Dorsolateral prefrontal cortex (tissue), 120 donors: ENCODE measurements at regions of chr13 and their contacts with region 1.

Region 1: DNA sequence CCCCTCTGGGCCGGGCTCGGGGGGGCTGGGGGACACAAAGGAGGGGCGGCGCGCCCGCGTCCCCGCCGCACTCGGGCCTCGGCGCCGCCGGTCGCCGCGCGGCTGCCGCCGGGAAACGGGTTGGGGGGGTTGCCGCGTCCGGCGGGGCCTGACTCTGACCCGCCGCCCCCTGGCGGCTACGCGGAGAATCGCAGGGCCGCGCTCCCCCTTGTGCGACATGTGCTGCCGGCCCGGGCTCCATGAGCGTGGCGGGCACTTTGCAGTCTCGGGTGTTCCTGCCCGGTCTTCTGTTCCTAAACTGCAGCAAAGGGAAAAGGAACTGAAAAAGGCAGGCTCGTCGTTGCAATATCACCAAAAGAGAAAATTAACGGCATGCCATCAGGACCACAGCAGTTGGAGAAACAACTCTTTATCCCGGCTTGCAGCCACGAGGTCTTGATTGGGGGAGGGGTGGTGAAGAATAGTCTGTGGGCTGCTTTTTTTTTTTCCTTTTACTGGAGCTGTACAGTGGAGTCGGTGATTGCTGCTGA is 1.5 kb downstream of the MIR17HG start:
- DNase-seq: peak; percentile 85 to 94 (median 92)
- H3K4me3 ChIP-seq: peak overlapping the region; percentile 46 to 93 (median 79)
- H3K27ac ChIP-seq: peak overlapping the region in 44 of 59 donors; percentile 33 to 98 (median 93)
- H3K27me3 ChIP-seq: no peaks in the 10 kb centered on the region
- CTCF ChIP-seq: peak; percentile 77 to 99 (median 89)

Region 2: GRCh38 chr13:91302111-91302510 is 46.9 kb before region 1 on chr13:
- intact Hi-C with region 1: no loop called
- DNase-seq: no peak
- H3K4me3 ChIP-seq: no peak overlapping the region
- H3K27ac ChIP-seq: no peak overlapping the region
- H3K27me3 ChIP-seq: peaks cover 0 to 13% (median 0%) of the 10 kb centered on the region in 45 donors
- CTCF ChIP-seq: no peak

Region 3: GRCh38 chr13:91313103-91313502 is 35.9 kb before region 1 on chr13:
- intact Hi-C with region 1: loop called in 1 of 2 experiments (anchors 2 kb)
- DNase-seq: no peak
- H3K4me3 ChIP-seq: peak overlapping the region in 29 of 59 donors; percentile 3 to 50 (median 31)
- H3K27ac ChIP-seq: no peak overlapping the region
- H3K27me3 ChIP-seq: peaks cover 0 to 39% (median 7%) of the 10 kb centered on the region in 45 donors
- CTCF ChIP-seq: peak in 55 of 56 donors; percentile 24 to 77 (median 59)

Region 4: DNA sequence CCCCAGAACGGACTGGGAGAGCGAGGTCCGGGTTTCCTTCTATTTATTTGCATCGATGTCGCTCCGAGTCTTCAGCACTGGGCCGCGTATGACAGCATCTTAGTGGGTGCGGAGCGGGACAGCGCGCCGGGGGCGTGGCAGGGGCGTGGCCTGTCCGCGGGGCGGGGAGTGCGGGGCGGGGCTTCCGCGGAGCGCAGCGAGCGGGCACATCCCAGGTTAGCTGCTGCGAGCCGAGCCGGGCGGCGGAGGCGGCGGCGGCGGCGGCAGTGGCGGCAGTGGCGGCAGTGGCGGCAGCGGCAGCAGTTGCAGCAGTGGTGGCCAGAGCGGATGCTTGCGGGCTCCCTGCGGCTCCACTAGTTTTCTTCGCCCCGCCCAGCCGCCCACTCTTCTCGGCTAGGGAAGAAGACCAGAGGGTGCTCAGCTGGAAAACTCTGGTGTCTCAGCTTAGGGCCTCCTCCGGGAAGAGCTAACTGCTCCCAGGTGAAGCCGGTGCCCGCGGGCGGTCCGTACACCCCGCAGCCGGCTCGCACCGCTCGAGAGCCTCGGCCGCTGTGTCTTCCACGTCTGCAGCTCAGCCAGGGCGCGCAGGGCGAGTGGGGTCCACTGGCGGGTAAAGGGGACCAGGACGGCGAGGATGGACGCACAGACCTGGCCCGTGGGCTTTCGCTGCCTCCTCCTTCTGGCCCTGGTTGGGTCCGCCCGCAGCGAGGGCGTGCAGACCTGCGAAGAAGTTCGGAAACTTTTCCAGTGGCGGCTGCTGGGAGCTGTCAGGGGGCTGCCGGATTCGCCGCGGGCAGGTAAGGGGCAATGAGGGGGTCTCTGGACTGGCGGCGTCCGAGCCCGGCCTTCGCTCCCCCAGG is 49.7 kb after region 1 on chr13 and contains the start of gene GPC5:
- intact Hi-C with region 1: loop called in 1 of 2 experiments (anchors 5 kb)
- DNase-seq: peak; percentile 44 to 90 (median 79)
- H3K4me3 ChIP-seq: peak within 1 kb of the TSS; percentile 47 to 86 (median 70)
- H3K27ac ChIP-seq: peak within 1 kb of the TSS in 29 of 59 donors; percentile 3 to 79 (median 44)
- H3K27me3 ChIP-seq: peaks cover 0 to 26% (median 3%) of the 10 kb centered on the region in 45 donors
- CTCF ChIP-seq: peak in 11 of 56 donors; percentile 4 to 39 (median 17)
- total RNA-seq, gene GPC5: 8.5 to 64.0 (median 22.4) TPM